ENCODE measurements at regions of chr2 and their contacts with region 1.

Region 1: DNA sequence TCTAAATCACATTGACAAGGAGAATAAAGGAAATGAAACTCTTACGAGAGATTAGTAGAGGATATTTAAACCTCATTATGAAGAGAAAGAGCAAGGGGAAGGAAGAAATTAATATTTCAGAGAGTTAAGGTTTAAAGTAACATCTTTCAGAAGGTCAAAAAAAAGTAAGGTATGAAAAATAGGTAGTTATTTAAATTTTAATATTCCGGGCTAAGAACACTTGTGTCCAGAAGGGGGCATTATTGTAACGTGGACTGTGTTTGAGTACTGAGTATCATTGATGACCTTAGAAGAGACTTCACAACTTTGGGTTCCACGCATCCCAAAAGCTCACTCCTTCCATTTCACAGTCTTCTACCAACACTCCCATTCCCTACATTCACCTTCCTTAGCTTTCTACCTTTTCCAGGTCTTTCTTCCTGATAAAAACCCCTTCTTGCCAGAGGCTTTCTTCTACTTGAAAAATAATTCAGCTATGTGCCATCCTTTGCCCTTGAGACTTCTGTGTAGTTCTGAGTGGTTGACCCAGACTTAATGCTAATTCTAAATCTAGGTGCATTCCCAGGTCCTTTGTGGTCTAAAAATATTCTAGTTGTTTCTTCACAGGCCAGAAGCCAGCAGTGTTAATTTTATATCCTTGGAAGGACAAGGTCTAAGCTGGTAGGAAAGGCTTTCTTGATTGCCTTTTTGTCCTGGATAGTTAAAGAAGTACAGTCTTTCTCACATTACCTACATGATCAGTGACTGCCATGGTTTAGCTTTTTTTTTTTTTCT is 16.5 kb downstream of the DYNC1I2 start:
- DNase-seq: peak; percentile 13
- H3K4me3 Mint-ChIP-seq: no peak overlapping the region
- H3K27ac Mint-ChIP-seq: peak overlapping the region; percentile 26
- H3K4me1 Mint-ChIP-seq: peaks cover 4% of the 10 kb centered on the region
- H3K27me3 Mint-ChIP-seq: no peaks in the 10 kb centered on the region

Region 2: GRCh38 chr2:171598713-171599319 is 104.9 kb before region 1 on chr2:
- CTCF ChIA-PET with region 1: interaction called, 4 read pairs
- intact Hi-C with region 1: loop called (anchors 5 kb)
- DNase-seq: peak; percentile 72
- H3K4me3 Mint-ChIP-seq: no peak overlapping the region
- H3K27ac Mint-ChIP-seq: no peak overlapping the region
- H3K4me1 Mint-ChIP-seq: no peaks in the 10 kb centered on the region
- H3K27me3 Mint-ChIP-seq: no peaks in the 10 kb centered on the region

Region 3: GRCh38 chr2:171999604-172000469 is 296.1 kb after region 1 on chr2 and contains the start of gene METAP1D:
- CTCF ChIA-PET with region 1: no interaction called
- intact Hi-C with region 1: loop called (anchors 5 kb)
- DNase-seq: peak; percentile 88
- H3K4me3 Mint-ChIP-seq: peak within 1 kb of the TSS; percentile 94
- H3K27ac Mint-ChIP-seq: peak within 1 kb of the TSS; percentile 89
- H3K4me1 Mint-ChIP-seq: peaks cover 25% of the 10 kb centered on the region
- H3K27me3 Mint-ChIP-seq: no peaks in the 10 kb centered on the region
- total RNA-seq, gene METAP1D: 2.5 to 3.4 TPM

Region 4: GRCh38 chr2:172131713-172132555 is 428.2 kb after region 1 on chr2:
- CTCF ChIA-PET with region 1: interaction called, 14 read pairs
- intact Hi-C with region 1: no loop called
- DNase-seq: no peak
- H3K4me3 Mint-ChIP-seq: no peak overlapping the region
- H3K27ac Mint-ChIP-seq: no peak overlapping the region
- H3K4me1 Mint-ChIP-seq: no peaks in the 10 kb centered on the region
- H3K27me3 Mint-ChIP-seq: no peaks in the 10 kb centered on the region